ENCODE measurements at regions of chr12 and their contacts with region 1.

Region 1: DNA sequence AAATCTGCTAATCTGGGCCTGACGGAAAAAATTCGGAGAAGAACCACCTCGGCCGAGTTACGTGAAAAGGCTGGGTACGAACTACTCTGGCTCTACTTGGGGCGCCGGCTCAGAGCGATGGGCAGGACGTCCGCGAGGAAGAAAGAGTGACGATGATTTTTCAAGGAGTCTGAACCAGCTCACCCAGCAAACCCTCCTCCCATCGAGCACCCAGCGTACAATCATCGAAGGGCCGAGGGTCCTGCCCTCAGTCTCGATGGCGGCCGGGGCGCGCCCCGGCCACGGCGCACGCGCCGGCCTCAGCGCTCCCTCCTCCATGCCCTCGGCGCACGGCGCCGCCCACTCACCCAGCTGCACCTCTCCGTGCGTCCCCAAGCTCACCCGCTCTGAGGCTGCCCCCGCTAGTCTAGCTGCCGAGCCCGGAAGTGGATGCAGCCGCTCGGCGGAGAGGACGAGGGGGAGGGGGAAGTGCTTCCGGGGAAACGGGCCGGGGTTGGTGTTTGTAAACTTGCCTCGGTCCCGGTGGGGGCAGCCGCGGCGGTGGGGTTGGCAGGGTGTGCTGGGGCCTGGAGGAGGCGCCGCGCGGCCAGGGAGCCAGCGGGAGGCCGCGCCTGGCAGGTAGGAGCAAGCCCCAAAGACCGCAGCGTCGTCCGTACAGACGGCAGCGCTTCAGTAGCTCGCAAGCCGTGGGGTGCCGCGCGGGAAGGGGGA is at the starts of genes CSAD and ZNF740:
- DNase-seq: peak; percentile 93 to 99 (median 98)
- ATAC-seq: peak; percentile 96
- H3K4me3 ChIP-seq: peak within 1 kb of the TSS; percentile 78 to 84
- H3K4me3 Mint-ChIP-seq: peak within 1 kb of the TSS; percentile 86
- H3K27ac ChIP-seq: peak within 1 kb of the TSS; percentile 75 to 88
- H3K27ac Mint-ChIP-seq: peak within 1 kb of the TSS; percentile 98
- H3K4me1 ChIP-seq: peaks cover 51% of the 10 kb centered on the region
- H3K4me1 Mint-ChIP-seq: peaks cover 52% of the 10 kb centered on the region
- H3K27me3 ChIP-seq: no peaks in the 10 kb centered on the region
- H3K27me3 Mint-ChIP-seq: no peaks in the 10 kb centered on the region
- CTCF ChIP-seq: no peak
- total RNA-seq, gene CSAD: 28.0 to 29.6 TPM
- total RNA-seq, gene ZNF740: 24.8 to 24.9 TPM

Region 2: GRCh38 chr12:53005986-53006809 is 174.2 kb before region 1 on chr12 and contains the start of gene EIF4B:
- CTCF ChIA-PET with region 1: no interaction called
- POLR2A ChIA-PET with region 1: no interaction called
- intact Hi-C with region 1: loop called in 1 of 2 experiments (anchors 2 kb)
- DNase-seq: peak; percentile 99 to 100 (median 99)
- ATAC-seq: peak; percentile 89
- H3K4me3 ChIP-seq: peak within 1 kb of the TSS; percentile 93 to 99
- H3K4me3 Mint-ChIP-seq: peak within 1 kb of the TSS; percentile 100
- H3K27ac ChIP-seq: peak within 1 kb of the TSS; percentile 80 to 97
- H3K27ac Mint-ChIP-seq: peak within 1 kb of the TSS; percentile 98
- H3K4me1 ChIP-seq: peaks cover 44% of the 10 kb centered on the region
- H3K4me1 Mint-ChIP-seq: peaks cover 48% of the 10 kb centered on the region
- H3K27me3 ChIP-seq: peaks cover 0 to 2% of the 10 kb centered on the region in 2 experiments
- H3K27me3 Mint-ChIP-seq: peaks cover 3% of the 10 kb centered on the region
- CTCF ChIP-seq: no peak
- total RNA-seq, gene EIF4B: 709 to 741 TPM

Region 3: DNA sequence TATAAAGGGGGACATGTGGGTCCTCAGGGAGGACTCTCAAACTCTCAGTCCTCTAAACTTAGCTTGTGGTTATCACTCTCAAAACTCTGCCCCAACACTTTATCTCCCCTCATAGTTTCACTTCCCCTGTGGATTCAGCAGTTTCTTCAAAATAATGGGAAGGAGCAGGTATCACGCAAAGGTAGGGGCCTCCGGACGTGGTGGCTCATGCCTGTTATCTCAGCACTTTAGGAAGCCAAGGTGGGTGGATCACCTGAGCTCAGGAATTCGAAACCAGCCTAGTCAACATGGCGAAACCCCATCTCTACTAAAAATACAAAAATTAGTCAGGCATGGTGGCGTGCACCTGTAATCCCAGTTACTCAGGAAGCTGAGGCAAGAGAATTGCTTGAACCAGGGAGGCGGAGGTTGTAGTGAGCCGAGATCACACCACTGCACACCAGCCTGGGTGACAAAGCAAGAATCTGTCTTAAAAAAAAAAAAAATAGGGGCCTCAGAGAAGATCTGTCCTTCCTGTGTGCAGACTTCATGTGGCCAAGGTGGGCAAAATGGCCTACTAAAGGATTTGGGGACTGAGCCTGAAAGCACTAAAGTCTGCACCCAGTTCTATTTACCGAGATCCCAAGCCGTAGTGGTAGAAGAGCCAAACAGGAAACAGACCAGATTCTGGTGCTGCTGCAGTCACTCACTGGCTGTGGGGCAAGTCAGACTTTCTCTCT is 20.2 kb after region 1 on chr12:
- CTCF ChIA-PET with region 1: interaction called, 10 read pairs
- POLR2A ChIA-PET with region 1: interaction called, 32 read pairs
- intact Hi-C with region 1: loop called in 1 of 2 experiments (anchors 2 kb)
- DNase-seq: peak in 3 of 9 experiments; percentile 31 to 63 (median 49)
- ATAC-seq: peak; percentile 41
- H3K4me3 ChIP-seq: peak overlapping the region in 1 of 2 experiments; percentile 7
- H3K4me3 Mint-ChIP-seq: peak overlapping the region; percentile 73
- H3K27ac ChIP-seq: peak overlapping the region; percentile 14 to 30
- H3K27ac Mint-ChIP-seq: peak overlapping the region; percentile 93
- H3K4me1 ChIP-seq: peaks cover 89% of the 10 kb centered on the region
- H3K4me1 Mint-ChIP-seq: peaks cover 72% of the 10 kb centered on the region
- H3K27me3 ChIP-seq: no peaks in the 10 kb centered on the region
- H3K27me3 Mint-ChIP-seq: no peaks in the 10 kb centered on the region
- CTCF ChIP-seq: no peak

Region 4: GRCh38 chr12:53220801-53221202 is 40.4 kb after region 1 on chr12:
- CTCF ChIA-PET with region 1: interaction called, 5 read pairs
- POLR2A ChIA-PET with region 1: interaction called, 20 read pairs
- intact Hi-C with region 1: loop called (anchors 1 kb)
- DNase-seq: peak; percentile 46 to 93 (median 75)
- ATAC-seq: peak; percentile 60
- H3K4me3 ChIP-seq: peak overlapping the region; percentile 69 to 88
- H3K4me3 Mint-ChIP-seq: peak overlapping the region; percentile 99
- H3K27ac ChIP-seq: peak overlapping the region; percentile 66 to 91
- H3K27ac Mint-ChIP-seq: peak overlapping the region; percentile 93
- H3K4me1 ChIP-seq: peaks cover 67% of the 10 kb centered on the region
- H3K4me1 Mint-ChIP-seq: peaks cover 82% of the 10 kb centered on the region
- H3K27me3 ChIP-seq: no peaks in the 10 kb centered on the region
- H3K27me3 Mint-ChIP-seq: no peaks in the 10 kb centered on the region
- CTCF ChIP-seq: no peak

Region 5: DNA sequence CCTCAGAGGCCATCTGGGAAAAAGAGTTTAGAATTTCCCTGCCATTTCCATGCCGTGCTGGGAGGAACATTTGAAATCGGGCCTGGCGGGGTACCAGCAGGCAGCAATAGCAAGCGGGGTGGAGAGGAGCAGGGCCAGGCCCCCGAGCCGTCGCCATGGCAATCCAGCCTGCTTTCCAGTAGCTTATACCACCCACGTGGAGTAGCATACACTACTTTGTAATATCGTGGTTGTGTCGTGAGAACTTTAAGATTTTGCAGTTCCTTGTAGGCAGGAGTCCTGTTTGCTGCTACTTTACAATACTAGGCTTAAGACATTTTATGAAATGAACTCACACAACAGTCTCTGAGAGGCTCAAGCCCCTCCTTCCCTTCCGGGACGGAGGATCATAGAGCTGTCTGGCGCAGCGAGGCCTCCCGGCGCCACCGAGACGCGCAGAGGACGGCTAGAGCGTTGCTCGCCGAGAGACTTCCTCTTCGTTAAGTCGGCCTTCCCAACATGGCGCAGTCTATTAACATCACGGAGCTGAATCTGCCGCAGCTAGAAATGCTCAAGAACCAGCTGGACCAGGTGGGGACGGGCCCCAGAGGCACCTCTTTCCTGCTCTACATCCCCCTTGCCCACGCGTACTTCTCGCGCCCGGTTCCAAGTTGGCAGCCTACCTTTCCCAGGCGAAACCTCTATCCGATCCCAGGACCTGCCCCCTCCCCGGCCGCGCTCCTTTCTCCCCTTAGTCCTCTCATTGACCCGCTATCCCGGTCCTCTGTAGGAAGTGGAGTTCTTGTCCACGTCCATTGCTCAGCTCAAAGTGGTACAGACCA is 114.9 kb after region 1 on chr12 and contains the start of gene PFDN5:
- CTCF ChIA-PET with region 1: no interaction called
- POLR2A ChIA-PET with region 1: interaction called, 19 read pairs
- intact Hi-C with region 1: loop called (anchors 1 kb)
- DNase-seq: peak; percentile 72 to 95 (median 87)
- ATAC-seq: peak; percentile 92
- H3K4me3 ChIP-seq: peak within 1 kb of the TSS; percentile 75 to 88
- H3K4me3 Mint-ChIP-seq: peak within 1 kb of the TSS; percentile 99
- H3K27ac ChIP-seq: peak within 1 kb of the TSS; percentile 80 to 82
- H3K27ac Mint-ChIP-seq: peak within 1 kb of the TSS; percentile 99
- H3K4me1 ChIP-seq: peaks cover 28% of the 10 kb centered on the region
- H3K4me1 Mint-ChIP-seq: peaks cover 51% of the 10 kb centered on the region
- H3K27me3 ChIP-seq: no peaks in the 10 kb centered on the region
- H3K27me3 Mint-ChIP-seq: no peaks in the 10 kb centered on the region
- CTCF ChIP-seq: no peak
- total RNA-seq, gene PFDN5: 741 to 751 TPM

Region 6: DNA sequence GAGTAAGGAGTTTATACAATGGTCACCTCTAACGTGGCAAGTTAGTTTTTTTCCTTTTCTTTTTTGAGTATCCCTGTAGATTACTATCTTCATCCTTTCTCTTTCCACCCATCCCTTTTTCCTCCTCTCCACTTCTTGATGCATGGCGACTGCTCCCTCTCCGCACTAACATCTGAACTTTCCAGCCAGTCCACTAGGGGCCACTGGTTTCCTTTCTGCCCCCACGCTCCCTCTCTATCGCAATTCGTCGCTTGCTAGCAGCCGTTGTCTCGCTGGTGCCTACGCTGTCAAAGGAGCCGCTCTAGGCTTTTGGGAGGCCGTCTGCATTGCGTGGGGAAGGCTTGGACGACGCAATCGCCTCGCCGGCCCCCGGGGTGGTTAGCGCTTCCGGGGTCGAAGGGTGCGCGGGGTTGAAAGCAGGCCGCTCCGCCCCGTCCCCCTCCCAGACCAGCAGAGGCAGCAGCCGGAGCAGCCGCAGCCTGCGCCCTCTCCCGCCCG is 271.3 kb after region 1 on chr12 and contains the start of gene PCBP2:
- CTCF ChIA-PET with region 1: no interaction called
- POLR2A ChIA-PET with region 1: interaction called, 4 read pairs
- intact Hi-C with region 1: loop called in 1 of 2 experiments (anchors 5 kb)
- DNase-seq: peak; percentile 94 to 99 (median 98)
- ATAC-seq: peak; percentile 93
- H3K4me3 ChIP-seq: peak within 1 kb of the TSS; percentile 81 to 88
- H3K4me3 Mint-ChIP-seq: peak within 1 kb of the TSS; percentile 99
- H3K27ac ChIP-seq: peak within 1 kb of the TSS; percentile 80 to 95
- H3K27ac Mint-ChIP-seq: peak within 1 kb of the TSS; percentile 99
- H3K4me1 ChIP-seq: peaks cover 27% of the 10 kb centered on the region
- H3K4me1 Mint-ChIP-seq: peaks cover 43% of the 10 kb centered on the region
- H3K27me3 ChIP-seq: no peaks in the 10 kb centered on the region
- H3K27me3 Mint-ChIP-seq: no peaks in the 10 kb centered on the region
- CTCF ChIP-seq: peak; percentile 94
- total RNA-seq, gene PCBP2: 1,250 to 1,255 TPM

Region 7: GRCh38 chr12:53518381-53518780 is 338.0 kb after region 1 on chr12:
- CTCF ChIA-PET with region 1: no interaction called
- POLR2A ChIA-PET with region 1: no interaction called
- intact Hi-C with region 1: no loop called
- DNase-seq: no peak
- ATAC-seq: no peak
- H3K4me3 ChIP-seq: no peak overlapping the region
- H3K4me3 Mint-ChIP-seq: no peak overlapping the region
- H3K27ac ChIP-seq: no peak overlapping the region
- H3K27ac Mint-ChIP-seq: no peak overlapping the region
- H3K4me1 ChIP-seq: no peaks in the 10 kb centered on the region
- H3K4me1 Mint-ChIP-seq: no peaks in the 10 kb centered on the region
- H3K27me3 ChIP-seq: no peaks in the 10 kb centered on the region
- H3K27me3 Mint-ChIP-seq: no peaks in the 10 kb centered on the region
- CTCF ChIP-seq: no peak

Measured in CD8-positive, alpha-beta T cell (primary cell).